Astrocyte of the cerebellum (primary cell): ENCODE measurements at regions of chr9 and their contacts with region 1.

Region 1: DNA sequence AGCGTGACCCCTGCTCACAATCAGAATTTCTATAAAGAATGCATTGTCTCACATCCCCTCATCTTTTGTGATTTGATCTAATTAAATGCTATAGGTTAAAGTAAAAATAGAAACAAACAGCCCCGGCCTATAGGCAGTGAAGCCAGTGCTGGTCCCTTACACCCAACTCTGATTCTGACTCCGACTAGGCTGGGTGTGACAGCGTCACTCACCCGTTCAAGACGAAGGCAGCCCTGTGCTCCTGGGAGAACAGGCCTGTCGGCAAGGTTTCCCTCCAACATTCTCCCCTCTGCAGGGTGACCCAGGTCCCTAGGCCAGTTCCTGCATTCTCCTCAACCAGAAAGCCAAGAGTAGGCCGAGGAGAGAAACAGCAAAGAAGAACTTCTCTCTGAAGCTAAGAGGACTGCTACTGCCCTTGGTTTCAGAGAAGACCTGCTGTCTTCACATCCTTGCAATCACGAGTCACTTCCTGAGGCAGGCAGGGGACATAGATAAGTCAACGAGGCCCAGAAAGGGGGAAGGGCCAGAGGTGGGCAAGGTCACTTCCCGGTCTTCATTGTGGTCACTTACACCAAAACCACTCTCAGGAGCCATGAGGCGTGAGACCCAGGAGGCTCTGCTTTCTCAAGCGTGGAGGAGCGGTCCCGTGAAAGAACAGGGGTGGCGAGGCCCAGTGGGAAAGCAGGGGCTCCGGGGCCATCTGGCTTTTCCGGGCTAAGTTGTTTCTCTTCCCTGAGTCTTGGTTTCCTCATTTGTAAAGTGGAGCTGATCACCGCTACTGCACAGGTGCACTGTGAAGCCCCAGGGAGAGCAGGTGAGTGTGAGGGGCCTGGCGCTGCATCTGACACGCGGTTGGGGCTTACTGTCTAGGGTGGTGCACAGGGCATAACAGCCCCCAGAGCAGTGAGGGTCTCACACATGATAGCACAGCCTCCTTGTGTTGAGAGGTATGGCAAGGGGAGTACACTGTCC is 200.8 kb downstream of the CRB2 start:
- DNase-seq: no peak
- H3K4me3 ChIP-seq: no peak overlapping the region
- CTCF ChIP-seq: no peak

Region 2: GRCh38 chr9:123629531-123629930 is 72.8 kb after region 1 on chr9:
- in situ Hi-C with region 1: loop called (anchors 5 kb)
- DNase-seq: no peak
- H3K4me3 ChIP-seq: no peak overlapping the region
- CTCF ChIP-seq: no peak